Ovary (tissue), 10 donors: ENCODE measurements at regions of chr17 and their contacts with region 1.

Region 1: GRCh38 chr17:4891411-4892342 is 7.7 kb upstream of the C17orf107 start:
- DNase-seq: peak in 1 of 5 donors; percentile 34
- H3K4me3 ChIP-seq: no peak overlapping the region
- H3K27ac ChIP-seq: no peak overlapping the region
- H3K4me1 ChIP-seq: no peaks in the 10 kb centered on the region
- H3K27me3 ChIP-seq: no peaks in the 10 kb centered on the region
- CTCF ChIP-seq: no peak
- EP300 ChIP-seq: no peak
- POLR2A ChIP-seq: no peak

Region 2: GRCh38 chr17:4709794-4710692 is 181.6 kb before region 1 on chr17 and contains the start of gene ARRB2:
- intact Hi-C with region 1: loop called in 1 of 4 experiments (anchors 2 kb)
- DNase-seq: peak; percentile 99
- H3K4me3 ChIP-seq: peak within 1 kb of the TSS; percentile 88
- H3K27ac ChIP-seq: peak within 1 kb of the TSS; percentile 63 to 84
- H3K4me1 ChIP-seq: peaks cover 3% of the 10 kb centered on the region
- H3K27me3 ChIP-seq: no peaks in the 10 kb centered on the region
- CTCF ChIP-seq: peak; percentile 60 to 76 (median 74)
- EP300 ChIP-seq: no peak
- POLR2A ChIP-seq: no peak
- total RNA-seq, gene ARRB2: 13.4 to 38.2 (median 30.6) TPM

Region 3: GRCh38 chr17:4796553-4796921 is 95.1 kb before region 1 on chr17:
- intact Hi-C with region 1: no loop called
- DNase-seq: no peak
- H3K4me3 ChIP-seq: peak overlapping the region; percentile 75
- H3K27ac ChIP-seq: peak overlapping the region; percentile 30 to 54
- H3K4me1 ChIP-seq: peaks cover 4% of the 10 kb centered on the region
- H3K27me3 ChIP-seq: no peaks in the 10 kb centered on the region
- CTCF ChIP-seq: no peak
- EP300 ChIP-seq: no peak
- POLR2A ChIP-seq: no peak

Region 4: DNA sequence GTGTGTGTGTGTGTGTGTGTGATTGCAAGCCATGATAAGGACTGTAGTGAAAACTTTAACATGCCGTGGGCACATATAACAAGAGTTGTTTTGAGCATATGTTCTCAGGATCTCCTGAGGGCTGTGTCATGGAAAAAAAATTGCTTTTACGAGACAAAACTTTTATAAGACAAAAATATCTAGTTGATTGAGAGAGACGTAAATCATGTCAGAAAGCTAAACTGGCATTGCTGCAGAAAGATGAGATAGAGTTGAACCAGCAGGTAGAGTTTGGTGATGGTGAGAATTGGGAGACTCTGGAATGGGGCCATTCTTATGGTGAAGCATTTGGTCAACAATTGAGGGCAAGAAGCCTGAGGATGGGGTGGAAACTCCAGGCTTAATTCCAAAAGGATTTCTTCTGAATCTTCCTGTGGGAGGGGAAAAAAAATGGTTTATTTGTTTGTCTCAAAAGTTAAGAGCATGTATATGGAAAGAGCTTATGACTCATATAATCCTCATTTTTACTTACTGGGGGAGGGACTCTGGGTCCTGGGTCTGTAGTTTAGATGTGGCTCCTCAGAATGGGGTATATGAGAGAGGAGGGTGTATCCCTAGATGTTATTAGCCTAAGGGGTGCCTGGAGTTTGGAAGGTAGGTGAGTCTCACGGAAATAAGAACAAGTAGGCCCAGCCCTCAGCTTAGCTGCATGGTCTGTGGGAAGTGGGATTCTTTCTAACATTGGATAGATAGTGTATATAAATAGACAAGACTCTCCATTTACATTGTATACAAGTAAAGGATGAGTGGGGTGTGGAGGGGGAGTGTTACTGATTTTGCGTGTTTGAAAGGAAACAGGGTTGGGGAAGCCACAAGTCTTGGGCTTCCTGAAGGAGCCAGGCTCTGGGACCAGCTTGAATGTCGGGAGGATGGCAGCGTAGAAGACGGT is 51.4 kb before region 1 on chr17:
- intact Hi-C with region 1: loop called in 1 of 4 experiments (anchors 5 kb)
- DNase-seq: no peak
- H3K4me3 ChIP-seq: no peak overlapping the region
- H3K27ac ChIP-seq: peak overlapping the region in 1 of 2 donors; percentile 52
- H3K4me1 ChIP-seq: peaks cover 30% of the 10 kb centered on the region
- H3K27me3 ChIP-seq: no peaks in the 10 kb centered on the region
- CTCF ChIP-seq: no peak
- EP300 ChIP-seq: no peak
- POLR2A ChIP-seq: no peak

Region 5: DNA sequence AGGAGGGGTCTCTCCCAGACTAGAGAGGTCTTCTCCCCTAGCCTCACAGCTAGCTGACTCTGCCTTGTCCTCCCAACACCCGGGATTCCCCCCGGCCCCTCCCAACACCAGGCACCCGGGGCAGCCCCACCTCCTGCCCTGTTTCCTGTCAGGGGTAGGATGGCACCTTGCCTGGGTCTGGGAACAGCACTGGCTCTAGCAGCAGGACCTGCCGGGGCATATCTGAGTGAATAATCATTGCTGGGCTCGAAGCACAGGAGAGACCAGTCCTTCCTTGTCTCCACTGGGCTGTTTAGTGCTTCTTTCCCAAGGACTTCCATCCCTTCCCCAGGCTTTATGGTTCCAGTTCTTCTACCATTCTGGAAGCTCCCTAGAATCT is 32.8 kb before region 1 on chr17:
- intact Hi-C with region 1: no loop called
- DNase-seq: peak in 2 of 5 donors; percentile 39 to 55
- H3K4me3 ChIP-seq: no peak overlapping the region
- H3K27ac ChIP-seq: peak overlapping the region; percentile 22 to 59
- H3K4me1 ChIP-seq: peaks cover 16% of the 10 kb centered on the region
- H3K27me3 ChIP-seq: no peaks in the 10 kb centered on the region
- CTCF ChIP-seq: no peak
- EP300 ChIP-seq: no peak
- POLR2A ChIP-seq: no peak